K562 (cell line): ENCODE measurements at regions of chr22 and their contacts with region 1.

Region 1: DNA sequence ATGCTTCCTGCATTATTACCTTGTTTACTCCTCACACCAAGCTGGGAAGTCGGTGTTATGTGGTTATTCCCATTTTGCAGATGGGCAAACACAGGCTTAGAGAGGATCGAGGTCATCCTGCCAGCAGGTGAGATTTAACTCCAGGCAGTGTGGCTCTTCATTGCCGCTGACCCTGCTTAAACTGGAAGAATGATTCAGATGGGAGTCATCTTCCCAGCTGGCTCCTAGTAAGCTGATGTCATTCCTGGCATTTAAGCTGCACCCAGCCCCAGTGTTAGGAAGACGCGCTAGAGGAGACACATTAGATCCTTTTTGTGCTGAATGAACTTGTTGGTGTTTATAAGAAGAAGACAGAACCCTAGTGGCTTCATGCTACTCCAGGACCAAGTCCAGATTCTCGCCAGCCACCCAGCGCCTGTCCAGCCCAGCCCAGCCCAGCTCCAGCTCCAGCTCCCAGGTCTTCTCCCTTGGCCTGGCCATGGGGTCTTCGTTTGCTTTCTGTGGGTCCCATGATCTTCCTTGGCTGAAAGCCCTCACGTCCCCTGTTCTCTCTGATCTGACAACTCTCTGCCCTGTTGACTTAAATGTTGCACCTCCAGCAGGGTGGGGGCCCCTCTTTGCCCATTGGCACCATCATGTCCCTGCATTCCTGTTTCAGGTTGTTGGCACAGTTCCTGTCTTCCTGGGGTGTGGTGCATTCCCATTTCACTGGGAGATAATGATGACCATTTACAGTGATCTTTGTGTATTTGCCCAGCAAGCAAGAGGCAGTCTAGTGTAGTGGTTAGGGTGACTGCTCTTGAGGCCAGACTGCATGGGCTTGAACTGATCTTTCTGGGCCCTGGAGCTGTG is 13.6 kb downstream of the PARVB start:
- DNase-seq: no peak
- ATAC-seq: no peak
- H3K4me3 ChIP-seq: no peak overlapping the region
- H3K27ac ChIP-seq: no peak overlapping the region; the same call in 2 of the 3 replicates
- H3K4me1 ChIP-seq: peaks cover 0 to 11% of the 10 kb centered on the region in 2 experiments; a peak in 3 of 5 replicates
- H3K27me3 ChIP-seq: no peaks in the 10 kb centered on the region
- CTCF ChIP-seq: no peak
- EP300 ChIP-seq: no peak
- POLR2A ChIP-seq: no peak
- RAD21 ChIP-seq: no peak

Region 2: GRCh38 chr22:44026630-44027511 is 10.9 kb before region 1 on chr22:
- CTCF ChIA-PET with region 1: no interaction called
- POLR2A ChIA-PET with region 1: interaction called, 13 read pairs
- in situ Hi-C with region 1: no loop called
- intact Hi-C with region 1: no loop called
- DNase-seq: peak; percentile 41 to 82 (median 52)
- ATAC-seq: peak; percentile 69
- H3K4me3 ChIP-seq: peak overlapping the region; percentile 69
- H3K27ac ChIP-seq: peak overlapping the region; percentile 87
- H3K4me1 ChIP-seq: peaks cover 31 to 55% of the 10 kb centered on the region in 2 experiments
- H3K27me3 ChIP-seq: no peaks in the 10 kb centered on the region
- CTCF ChIP-seq: no peak
- EP300 ChIP-seq: no peak
- POLR2A ChIP-seq: peak; percentile 46; the same call in 1 of the 2 replicates
- RAD21 ChIP-seq: no peak